IMR-90 (cell line): ENCODE measurements at regions of chr11 and their contacts with region 1.

Region 1: GRCh38 chr11:32090545-32091373 is at the start of gene RCN1:
- DNase-seq: peak; percentile 86
- ATAC-seq: peak; percentile 85
- H3K4me3 ChIP-seq: peak within 1 kb of the TSS; percentile 96
- H3K27ac ChIP-seq: peak within 1 kb of the TSS; percentile 99
- H3K4me1 ChIP-seq: peaks cover 30% of the 10 kb centered on the region
- H3K27me3 ChIP-seq: no peaks in the 10 kb centered on the region
- CTCF ChIP-seq: no peak
- POLR2A ChIP-seq: peak; percentile 83
- RAD21 ChIP-seq: no peak
- total RNA-seq, gene RCN1: 129 and 231 TPM in 2 replicates

Region 2: DNA sequence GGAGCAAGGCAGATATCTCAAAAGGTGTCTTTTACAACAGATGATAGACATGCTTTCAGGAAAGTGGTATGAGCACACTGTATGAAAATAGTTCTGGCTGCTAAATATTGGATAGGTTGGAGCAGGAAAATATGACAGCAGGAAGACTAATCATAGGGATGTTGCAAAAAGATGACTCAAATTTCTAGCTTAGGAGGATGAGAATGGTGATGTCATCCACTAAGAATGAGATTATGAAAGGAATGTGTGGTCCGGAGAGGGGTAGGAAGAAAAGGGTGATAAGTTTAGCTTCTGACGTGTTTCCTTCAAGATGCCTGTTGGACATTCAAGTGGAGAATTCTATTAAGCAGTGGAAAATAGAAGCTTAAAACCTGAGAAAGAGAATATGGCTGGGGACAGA is 46.5 kb after region 1 on chr11:
- CTCF ChIA-PET with region 1: no interaction called
- POLR2A ChIA-PET with region 1: no interaction called
- dilution Hi-C with region 1: no loop called
- in situ Hi-C with region 1: no loop called
- intact Hi-C with region 1: loop called (anchors 2 kb)
- DNase-seq: peak; percentile 99
- ATAC-seq: peak; percentile 97
- H3K4me3 ChIP-seq: no peak overlapping the region
- H3K27ac ChIP-seq: no peak overlapping the region
- H3K4me1 ChIP-seq: peaks cover 13% of the 10 kb centered on the region
- H3K27me3 ChIP-seq: no peaks in the 10 kb centered on the region
- CTCF ChIP-seq: no peak
- POLR2A ChIP-seq: no peak
- RAD21 ChIP-seq: no peak

Region 3: GRCh38 chr11:32153747-32154146 is 63.0 kb after region 1 on chr11:
- CTCF ChIA-PET with region 1: no interaction called
- POLR2A ChIA-PET with region 1: no interaction called
- dilution Hi-C with region 1: no loop called
- in situ Hi-C with region 1: no loop called
- intact Hi-C with region 1: no loop called
- DNase-seq: no peak
- ATAC-seq: no peak
- H3K4me3 ChIP-seq: no peak overlapping the region
- H3K27ac ChIP-seq: no peak overlapping the region
- H3K4me1 ChIP-seq: no peaks in the 10 kb centered on the region; the same call in 1 of the 2 replicates
- H3K27me3 ChIP-seq: peaks cover 38% of the 10 kb centered on the region
- CTCF ChIP-seq: no peak
- POLR2A ChIP-seq: no peak
- RAD21 ChIP-seq: no peak

Region 4: DNA sequence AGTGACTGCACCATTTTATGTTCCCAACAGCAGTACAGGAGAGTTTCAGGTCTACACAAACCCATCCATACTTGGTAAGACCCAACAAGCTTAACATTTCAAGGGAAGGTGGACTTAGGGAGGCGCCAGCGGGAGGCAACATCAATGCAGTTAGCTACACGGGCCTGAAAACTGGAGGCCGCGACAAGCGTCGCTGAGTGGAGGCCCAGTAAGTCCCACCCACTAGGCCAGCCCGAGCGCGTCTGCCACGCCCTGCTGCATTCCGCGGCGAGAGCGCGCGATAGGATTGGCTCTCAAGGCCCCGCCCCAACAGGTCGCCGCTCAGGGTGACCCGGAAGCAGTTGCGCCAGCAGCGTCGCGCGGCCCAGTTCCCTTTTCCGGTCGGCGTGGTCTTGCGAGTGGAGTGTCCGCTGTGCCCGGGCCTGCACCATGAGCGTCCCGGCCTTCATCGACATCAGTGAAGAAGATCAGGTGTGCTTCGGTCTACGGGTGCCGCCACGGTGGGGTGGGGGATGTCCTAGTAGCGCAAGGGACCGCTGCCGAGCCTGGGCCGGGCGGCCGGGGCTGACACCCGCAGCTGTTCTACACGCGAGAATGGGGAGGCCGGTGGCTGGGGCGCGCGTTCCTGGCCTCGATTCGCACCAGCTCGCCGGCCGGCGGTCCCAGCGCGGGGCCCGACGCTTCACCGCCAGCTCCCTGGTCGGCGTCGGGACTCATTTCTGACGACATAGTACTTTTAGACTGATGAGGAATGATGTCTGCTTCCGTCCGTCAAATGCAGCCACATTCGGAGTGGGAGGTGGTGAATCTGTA is 492.9 kb after region 1 on chr11 and contains the start of gene EIF3M:
- CTCF ChIA-PET with region 1: no interaction called
- POLR2A ChIA-PET with region 1: no interaction called
- dilution Hi-C with region 1: no loop called
- in situ Hi-C with region 1: loop called (anchors 25 kb)
- intact Hi-C with region 1: no loop called
- DNase-seq: peak; percentile 94
- ATAC-seq: peak; percentile 99
- H3K4me3 ChIP-seq: peak within 1 kb of the TSS; percentile 75
- H3K27ac ChIP-seq: peak within 1 kb of the TSS; percentile 88
- H3K4me1 ChIP-seq: no peaks in the 10 kb centered on the region
- H3K27me3 ChIP-seq: no peaks in the 10 kb centered on the region
- CTCF ChIP-seq: no peak
- POLR2A ChIP-seq: peak; percentile 78
- RAD21 ChIP-seq: no peak
- total RNA-seq, gene EIF3M: 466 and 781 TPM in 2 replicates